Caco-2 (cell line): ENCODE measurements at regions of chr9 and their contacts with region 1.

Region 1: DNA sequence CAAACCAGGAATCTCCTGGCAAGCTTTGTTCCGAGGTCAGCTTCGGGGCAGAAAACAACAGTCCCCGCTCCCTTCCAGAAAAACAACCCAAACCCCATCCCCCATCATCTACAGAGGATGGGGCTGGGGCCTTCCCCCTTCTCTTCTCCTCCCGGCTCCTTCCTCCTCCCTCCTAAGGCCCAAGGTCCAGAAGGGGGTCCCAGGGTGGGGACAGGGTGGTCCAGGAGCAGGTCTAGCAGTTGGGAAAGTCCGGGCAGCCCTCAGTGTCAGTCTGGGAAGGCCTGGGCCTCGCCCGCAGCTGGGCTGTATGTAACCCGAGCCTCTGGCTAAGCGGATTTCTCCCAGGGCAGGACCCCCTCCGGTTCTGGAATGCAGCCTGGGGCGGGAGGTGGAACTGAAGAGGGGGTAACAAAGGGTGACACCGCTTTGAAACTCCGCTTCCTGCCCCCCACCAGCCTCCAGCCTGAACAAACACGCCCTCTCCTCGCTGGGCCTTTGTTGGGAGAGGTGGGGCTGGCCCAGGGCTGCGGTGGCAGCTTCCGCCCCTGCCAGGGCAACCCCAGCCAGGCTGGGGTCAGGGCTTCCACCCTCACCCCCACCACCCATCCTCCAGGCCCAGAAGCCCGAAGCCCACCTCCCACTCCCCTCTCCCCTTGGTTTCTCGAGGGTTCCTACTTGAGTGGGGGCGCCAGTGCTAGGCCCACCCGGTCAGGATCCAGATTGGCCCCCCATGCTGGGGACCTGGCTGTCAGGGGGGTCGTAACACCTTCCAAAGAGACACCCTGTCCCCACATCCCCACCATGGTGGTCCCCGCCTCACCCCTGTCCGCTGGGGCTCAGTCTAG is 63.5 kb downstream of the C9orf50 start:
- DNase-seq: peak; percentile 74 to 92
- H3K4me3 ChIP-seq: no peak overlapping the region
- H3K4me3 Mint-ChIP-seq: peak overlapping the region; percentile 4
- H3K27ac Mint-ChIP-seq: peak overlapping the region; percentile 73
- H3K4me1 ChIP-seq: peaks cover 43% of the 10 kb centered on the region
- H3K4me1 Mint-ChIP-seq: peaks cover 36% of the 10 kb centered on the region
- H3K27me3 ChIP-seq: no peaks in the 10 kb centered on the region
- H3K27me3 Mint-ChIP-seq: no peaks in the 10 kb centered on the region
- CTCF ChIP-seq: no peak

Region 2: DNA sequence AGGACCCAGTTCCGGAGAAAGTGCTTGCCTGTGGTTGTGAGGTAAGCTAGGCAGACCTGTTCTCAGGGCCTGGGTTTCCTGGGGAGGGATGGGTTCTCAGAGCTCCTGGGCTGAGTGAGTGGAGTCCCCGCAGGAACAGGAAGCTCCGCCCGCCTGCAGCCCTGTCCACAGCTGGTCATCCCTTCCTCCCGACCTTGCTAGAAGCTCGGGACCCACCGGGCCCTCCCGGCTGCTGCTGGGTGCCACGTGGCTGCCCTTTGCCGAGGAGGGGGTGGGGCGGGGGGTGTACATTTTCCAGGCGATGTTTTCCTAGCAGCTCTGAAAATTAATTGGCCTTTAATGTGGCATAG is 134.6 kb before region 1 on chr9:
- CTCF ChIA-PET with region 1: no interaction called
- POLR2A ChIA-PET with region 1: no interaction called
- intact Hi-C with region 1: no loop called
- DNase-seq: no peak
- H3K4me3 ChIP-seq: no peak overlapping the region
- H3K4me3 Mint-ChIP-seq: no peak overlapping the region
- H3K27ac Mint-ChIP-seq: no peak overlapping the region
- H3K4me1 ChIP-seq: 0 out of 2 replicates have a peak, but pooled peaks cover 8% of the 10 kb centered on the region
- H3K4me1 Mint-ChIP-seq: no peaks in the 10 kb centered on the region
- H3K27me3 ChIP-seq: no peaks in the 10 kb centered on the region
- H3K27me3 Mint-ChIP-seq: no peaks in the 10 kb centered on the region
- CTCF ChIP-seq: no peak

Region 3: DNA sequence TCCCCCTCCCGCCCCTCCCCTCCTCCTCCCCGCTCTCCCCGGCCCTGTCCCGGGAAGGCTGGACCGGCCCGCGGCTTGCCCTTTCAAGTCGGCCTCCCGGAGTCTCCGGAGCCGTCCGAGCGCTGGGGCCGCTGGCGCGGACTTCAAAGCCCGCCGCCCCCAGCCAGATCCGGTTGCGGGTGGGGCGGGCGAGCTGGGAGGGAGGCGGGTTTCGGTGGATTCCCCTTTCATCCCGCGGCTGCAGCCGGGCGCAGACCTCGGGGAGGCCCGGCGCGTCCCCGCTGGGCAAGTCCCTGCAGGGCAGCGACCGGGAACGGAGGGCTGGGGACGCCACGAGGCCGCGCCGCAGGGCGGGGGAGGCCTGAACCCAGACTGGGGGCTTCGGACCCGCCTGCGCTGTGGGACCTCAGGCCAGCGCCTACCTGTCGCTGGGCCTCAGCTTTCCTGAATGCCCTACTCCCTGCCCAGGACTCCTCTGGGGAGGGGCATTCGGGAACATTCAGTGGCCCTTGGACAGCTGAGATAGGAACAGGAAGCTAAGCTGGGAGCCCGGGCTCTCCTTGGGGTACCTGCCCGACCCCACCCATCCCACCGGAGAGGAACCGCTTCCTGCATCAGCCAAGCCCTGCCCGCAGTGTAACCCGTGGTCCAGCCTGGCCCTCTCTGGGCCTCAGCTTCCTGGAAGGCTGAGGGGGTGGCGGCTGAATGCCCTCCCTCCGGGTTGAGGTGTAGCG is 40.1 kb after region 1 on chr9:
- CTCF ChIA-PET with region 1: interaction called, 3 read pairs
- POLR2A ChIA-PET with region 1: no interaction called
- intact Hi-C with region 1: loop called (anchors 5 kb)
- DNase-seq: peak; percentile 93 to 94
- H3K4me3 ChIP-seq: peak overlapping the region; percentile 61
- H3K4me3 Mint-ChIP-seq: peak overlapping the region; percentile 68
- H3K27ac Mint-ChIP-seq: peak overlapping the region; percentile 86
- H3K4me1 ChIP-seq: peaks cover 35% of the 10 kb centered on the region
- H3K4me1 Mint-ChIP-seq: peaks cover 18% of the 10 kb centered on the region
- H3K27me3 ChIP-seq: no peaks in the 10 kb centered on the region
- H3K27me3 Mint-ChIP-seq: no peaks in the 10 kb centered on the region
- CTCF ChIP-seq: no peak

Region 4: DNA sequence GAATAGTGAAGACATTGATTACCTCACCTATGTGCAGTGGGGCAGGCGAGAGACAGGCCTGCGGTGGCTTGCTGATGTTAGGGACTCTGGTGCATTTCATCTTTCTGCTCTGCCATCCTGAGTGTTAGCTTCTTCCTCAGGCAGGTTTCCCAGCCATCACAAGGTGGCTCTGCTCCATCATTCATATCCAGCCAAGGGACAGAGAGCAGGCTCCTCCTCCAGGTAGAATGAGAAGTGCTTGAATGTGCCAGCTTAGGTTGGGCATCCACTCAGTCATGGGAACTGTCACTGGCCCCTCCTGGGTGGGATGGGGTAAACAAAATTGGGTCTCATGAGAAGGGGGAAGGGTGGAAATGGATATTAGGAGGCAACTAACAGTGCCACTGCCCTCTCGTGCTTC is 521.1 kb after region 1 on chr9:
- CTCF ChIA-PET with region 1: no interaction called
- POLR2A ChIA-PET with region 1: no interaction called
- intact Hi-C with region 1: no loop called
- DNase-seq: no peak
- H3K4me3 ChIP-seq: no peak overlapping the region
- H3K4me3 Mint-ChIP-seq: no peak overlapping the region
- H3K27ac Mint-ChIP-seq: no peak overlapping the region
- H3K4me1 ChIP-seq: peaks cover 11% of the 10 kb centered on the region
- H3K4me1 Mint-ChIP-seq: no peaks in the 10 kb centered on the region
- H3K27me3 ChIP-seq: no peaks in the 10 kb centered on the region
- H3K27me3 Mint-ChIP-seq: no peaks in the 10 kb centered on the region
- CTCF ChIP-seq: no peak